ENCODE measurements at regions of chr13 and their contacts with region 1.

Region 1: DNA sequence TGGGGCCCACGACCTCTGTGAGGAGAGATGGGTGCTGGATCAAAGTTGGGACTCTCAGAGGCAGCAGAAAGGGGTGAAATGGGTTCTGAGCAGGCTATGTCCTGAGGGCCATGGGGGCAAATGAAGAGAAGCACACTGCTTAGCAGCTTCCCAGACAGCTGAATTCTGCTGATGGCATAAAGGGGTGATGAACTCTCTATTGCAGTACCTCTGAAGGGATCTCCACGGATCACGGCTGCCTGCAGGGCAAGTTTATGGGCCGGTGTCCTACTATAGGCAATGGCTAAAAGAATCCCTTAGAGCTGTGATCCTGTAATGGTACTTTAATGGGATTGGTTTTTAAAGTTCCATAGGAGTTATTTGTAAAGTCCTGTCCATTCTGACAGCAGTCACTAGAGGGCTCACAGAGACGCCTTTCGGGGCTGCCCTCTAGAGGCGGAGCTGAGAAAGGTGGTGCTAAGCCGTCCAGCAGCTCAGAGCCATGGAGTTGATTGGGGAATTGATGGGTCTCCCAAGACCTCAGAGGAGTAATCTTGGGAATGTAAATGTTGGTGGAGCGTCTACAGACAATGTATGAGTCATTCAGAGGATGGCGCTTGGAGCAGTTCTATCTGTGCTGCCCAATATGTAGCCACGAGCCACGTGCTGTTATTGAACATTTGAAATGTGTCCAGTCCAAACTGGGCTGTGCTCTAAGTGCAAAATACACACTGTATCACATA is 287.3 kb downstream of the COG6 start:
- DNase-seq: peak; percentile 91
- H3K4me3 Mint-ChIP-seq: no peak overlapping the region
- H3K27ac Mint-ChIP-seq: no peak overlapping the region
- H3K4me1 Mint-ChIP-seq: peaks cover 13% of the 10 kb centered on the region
- H3K27me3 Mint-ChIP-seq: peaks cover 3% of the 10 kb centered on the region

Region 2: GRCh38 chr13:38630780-38631179 is 1311.9 kb before region 1 on chr13:
- intact Hi-C with region 1: no loop called
- DNase-seq: no peak
- H3K4me3 Mint-ChIP-seq: no peak overlapping the region
- H3K27ac Mint-ChIP-seq: no peak overlapping the region
- H3K4me1 Mint-ChIP-seq: no peaks in the 10 kb centered on the region
- H3K27me3 Mint-ChIP-seq: no peaks in the 10 kb centered on the region

Region 3: GRCh38 chr13:39684531-39685137 is 258.1 kb before region 1 on chr13:
- intact Hi-C with region 1: loop called (anchors 5 kb)
- DNase-seq: no peak
- H3K4me3 Mint-ChIP-seq: no peak overlapping the region
- H3K27ac Mint-ChIP-seq: no peak overlapping the region
- H3K4me1 Mint-ChIP-seq: peaks cover 18% of the 10 kb centered on the region
- H3K27me3 Mint-ChIP-seq: no peaks in the 10 kb centered on the region

Region 4: GRCh38 chr13:39823063-39823713 is 119.5 kb before region 1 on chr13:
- intact Hi-C with region 1: loop called (anchors 5 kb)
- DNase-seq: no peak
- H3K4me3 Mint-ChIP-seq: peak overlapping the region; percentile 62
- H3K27ac Mint-ChIP-seq: no peak overlapping the region
- H3K4me1 Mint-ChIP-seq: peaks cover 20% of the 10 kb centered on the region
- H3K27me3 Mint-ChIP-seq: peaks cover 3% of the 10 kb centered on the region

Region 5: GRCh38 chr13:39959497-39960144 is 16.9 kb after region 1 on chr13:
- intact Hi-C with region 1: no loop called
- DNase-seq: no peak
- H3K4me3 Mint-ChIP-seq: no peak overlapping the region
- H3K27ac Mint-ChIP-seq: no peak overlapping the region
- H3K4me1 Mint-ChIP-seq: peaks cover 30% of the 10 kb centered on the region
- H3K27me3 Mint-ChIP-seq: no peaks in the 10 kb centered on the region

Region 6: DNA sequence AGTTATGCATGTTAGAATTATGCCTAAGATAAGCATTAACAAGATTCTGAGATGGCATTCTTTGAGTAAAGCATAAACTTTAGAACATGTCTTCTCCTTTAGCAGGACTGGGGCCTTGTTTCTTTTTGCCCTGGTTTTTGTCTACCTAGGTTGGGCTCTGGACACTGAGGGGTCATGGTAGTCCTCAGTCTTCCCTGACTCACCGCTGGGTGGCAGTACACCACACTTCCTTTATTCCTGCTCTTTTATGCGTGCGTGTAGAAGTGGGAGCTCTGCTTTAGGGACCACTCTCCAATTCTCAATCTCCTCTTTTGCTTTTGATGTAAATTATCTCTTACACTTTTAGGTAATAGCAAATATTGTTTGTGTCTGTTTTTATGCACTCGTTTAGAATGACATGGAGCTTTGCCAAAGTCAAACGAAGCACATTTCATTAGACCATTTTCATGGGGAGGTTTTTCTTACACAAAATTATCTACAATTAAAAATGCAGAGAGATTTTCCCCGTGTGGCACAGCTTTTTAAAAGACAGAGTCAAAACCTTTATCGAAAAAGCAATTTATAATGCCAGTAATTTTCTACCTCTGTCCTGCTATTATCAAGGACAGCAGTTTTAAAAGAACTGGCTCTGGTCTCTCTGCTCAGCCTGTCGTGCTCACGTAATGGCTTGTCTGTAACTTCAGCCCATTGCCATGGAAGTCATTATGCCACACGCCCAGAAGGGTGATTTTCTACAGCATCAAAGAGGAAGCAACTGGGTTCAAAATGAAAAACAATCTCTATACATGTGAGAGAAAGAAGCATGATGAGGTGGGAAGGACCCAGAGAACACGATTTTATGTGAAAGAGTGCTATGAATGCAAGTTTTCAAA is 126.7 kb after region 1 on chr13:
- intact Hi-C with region 1: loop called (anchors 2 kb)
- DNase-seq: peak; percentile 90
- H3K4me3 Mint-ChIP-seq: no peak overlapping the region
- H3K27ac Mint-ChIP-seq: no peak overlapping the region
- H3K4me1 Mint-ChIP-seq: peaks cover 25% of the 10 kb centered on the region
- H3K27me3 Mint-ChIP-seq: no peaks in the 10 kb centered on the region

Region 7: DNA sequence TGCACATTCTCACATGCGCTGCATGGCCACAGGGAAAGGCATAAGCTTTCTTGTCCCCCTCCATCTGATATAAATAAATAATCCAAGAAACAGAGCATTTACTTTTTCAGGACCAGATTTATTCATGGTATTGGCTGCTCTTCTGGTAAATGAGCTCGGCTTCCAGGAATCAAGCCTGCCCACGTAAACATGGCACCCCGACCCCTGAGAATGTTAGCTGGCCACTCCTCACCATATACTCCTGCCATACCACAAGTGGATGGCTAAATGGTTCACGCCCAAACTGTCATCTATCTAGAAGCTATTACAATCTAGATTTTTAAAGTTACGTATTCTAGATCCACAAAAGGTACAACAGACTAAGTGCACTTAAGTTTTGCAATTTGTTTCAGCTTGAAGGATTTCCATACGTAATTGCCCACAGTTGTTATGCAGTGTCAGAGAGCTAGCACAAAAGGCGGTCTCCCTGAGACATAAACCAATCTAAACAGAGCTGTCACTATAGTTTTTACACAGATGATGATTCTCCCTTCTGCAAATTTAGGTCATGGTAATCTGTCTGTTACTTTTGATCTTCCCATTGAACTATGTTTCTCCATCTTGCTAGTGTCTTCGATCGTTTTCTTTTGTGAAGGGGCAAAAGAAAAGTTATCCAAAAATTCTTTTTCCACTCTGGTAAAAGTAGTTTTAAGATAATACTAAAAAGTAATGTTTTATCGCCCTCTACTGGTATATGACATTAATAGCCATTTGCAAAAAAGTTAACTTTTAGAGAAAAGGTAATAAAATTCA is 739.9 kb after region 1 on chr13:
- intact Hi-C with region 1: loop called (anchors 2 kb)
- DNase-seq: no peak
- H3K4me3 Mint-ChIP-seq: no peak overlapping the region
- H3K27ac Mint-ChIP-seq: no peak overlapping the region
- H3K4me1 Mint-ChIP-seq: peaks cover 13% of the 10 kb centered on the region
- H3K27me3 Mint-ChIP-seq: no peaks in the 10 kb centered on the region

Measured in activated CD4-positive, alpha-beta T cell treated with anti-CD3 and anti-CD28 coated beads, Interleukin-2, amount 10 ng/mL, durations not matched to agents 24 days and 14 days (primary cell).